Caco-2 (cell line): ENCODE measurements at regions of chr1 and their contacts with region 1.

Region 1: DNA sequence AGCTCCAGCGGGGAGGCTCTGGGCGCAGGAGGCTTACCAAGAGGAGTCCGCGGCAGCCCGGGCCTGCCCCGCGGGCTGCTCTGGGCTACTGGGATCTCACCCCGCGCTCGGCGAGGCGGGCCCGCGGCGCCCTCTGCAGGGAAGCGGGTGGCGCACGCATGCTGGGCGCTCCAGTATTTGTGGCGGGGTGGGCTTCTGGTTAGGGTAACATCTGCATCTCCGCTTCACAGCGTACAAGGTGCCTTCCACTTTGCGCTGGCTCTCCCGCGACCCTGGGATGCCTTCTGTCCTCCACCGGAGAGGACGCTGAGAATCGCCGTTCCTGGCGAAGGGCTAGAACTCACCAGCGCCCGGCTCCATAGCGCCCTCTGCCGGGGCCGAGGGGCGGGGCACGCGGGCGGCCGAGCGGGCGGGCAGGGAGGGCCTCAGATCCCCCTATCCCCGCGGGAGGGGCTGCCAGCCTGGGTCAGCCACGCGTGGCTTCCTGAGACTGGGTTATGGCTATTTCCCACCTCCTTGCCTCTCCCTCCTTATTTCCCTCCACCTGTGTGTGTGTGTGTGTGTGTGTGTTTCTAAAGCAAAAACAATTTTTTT is 46.6 kb upstream of the CTBS start:
- DNase-seq: peak; percentile 66 to 83
- H3K4me3 ChIP-seq: peak overlapping the region; percentile 47
- H3K4me3 Mint-ChIP-seq: peak overlapping the region; percentile 70
- H3K27ac Mint-ChIP-seq: peak overlapping the region; percentile 45
- H3K4me1 ChIP-seq: no peaks in the 10 kb centered on the region
- H3K4me1 Mint-ChIP-seq: no peaks in the 10 kb centered on the region
- H3K27me3 ChIP-seq: no peaks in the 10 kb centered on the region
- H3K27me3 Mint-ChIP-seq: no peaks in the 10 kb centered on the region
- CTCF ChIP-seq: peak; percentile 41 to 86

Region 2: DNA sequence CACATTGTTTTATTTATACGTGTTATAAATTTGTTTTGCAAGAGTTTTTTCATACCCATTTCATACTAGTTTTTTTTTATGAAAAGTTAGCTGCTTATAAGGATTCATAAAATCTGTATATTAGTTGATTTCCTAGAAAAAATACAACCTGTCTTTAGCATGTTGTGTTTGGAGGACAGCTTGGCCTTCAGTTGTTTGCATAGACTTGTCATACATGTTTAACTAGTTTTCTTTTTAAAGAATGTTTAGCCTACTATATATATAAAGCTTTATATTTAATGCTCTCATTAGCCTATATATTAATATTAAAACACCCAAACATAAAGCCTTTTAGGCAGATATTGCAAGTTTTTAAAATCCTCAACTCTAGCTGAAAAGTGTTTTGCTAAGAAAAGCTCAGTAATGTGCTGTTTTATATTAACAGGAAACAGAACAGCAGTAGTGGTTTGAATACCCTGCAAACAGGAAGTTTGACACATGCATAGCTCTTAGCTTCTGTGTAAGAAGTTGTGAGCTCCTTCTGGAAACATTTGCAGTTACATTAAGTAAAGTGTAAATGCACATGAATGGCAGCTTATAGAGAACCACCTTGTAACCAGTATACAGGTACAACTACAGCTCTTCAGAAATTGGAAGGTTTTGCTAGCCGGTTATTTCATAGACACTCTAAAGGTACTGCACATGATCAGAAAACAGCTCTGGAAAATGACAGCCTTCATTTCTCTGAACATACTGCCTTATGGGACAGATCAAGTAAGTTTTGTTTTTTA is 476.8 kb before region 1 on chr1 and contains the start of gene PRKACB:
- CTCF ChIA-PET with region 1: no interaction called
- POLR2A ChIA-PET with region 1: no interaction called
- intact Hi-C with region 1: loop called (anchors 1 kb)
- DNase-seq: no peak
- H3K4me3 ChIP-seq: no peak within 1 kb of the TSS
- H3K4me3 Mint-ChIP-seq: no peak within 1 kb of the TSS
- H3K27ac Mint-ChIP-seq: no peak within 1 kb of the TSS
- H3K4me1 ChIP-seq: no peaks in the 10 kb centered on the region
- H3K4me1 Mint-ChIP-seq: no peaks in the 10 kb centered on the region
- H3K27me3 ChIP-seq: no peaks in the 10 kb centered on the region
- H3K27me3 Mint-ChIP-seq: no peaks in the 10 kb centered on the region
- CTCF ChIP-seq: no peak
- total RNA-seq, gene PRKACB: 3.2 and 3.4 TPM in 2 replicates

Region 3: GRCh38 chr1:84298684-84299535 is 321.9 kb before region 1 on chr1:
- CTCF ChIA-PET with region 1: no interaction called
- POLR2A ChIA-PET with region 1: no interaction called
- intact Hi-C with region 1: no loop called
- DNase-seq: peak; percentile 29 to 48
- H3K4me3 ChIP-seq: peak overlapping the region; percentile 82
- H3K4me3 Mint-ChIP-seq: peak overlapping the region; percentile 87
- H3K27ac Mint-ChIP-seq: peak overlapping the region; percentile 87
- H3K4me1 ChIP-seq: no peaks in the 10 kb centered on the region
- H3K4me1 Mint-ChIP-seq: no peaks in the 10 kb centered on the region
- H3K27me3 ChIP-seq: no peaks in the 10 kb centered on the region
- H3K27me3 Mint-ChIP-seq: no peaks in the 10 kb centered on the region
- CTCF ChIP-seq: no peak

Region 4: GRCh38 chr1:84442256-84442655 is 178.6 kb before region 1 on chr1:
- CTCF ChIA-PET with region 1: interaction called, 3 read pairs
- POLR2A ChIA-PET with region 1: no interaction called
- intact Hi-C with region 1: loop called (anchors 1 kb)
- DNase-seq: peak in 1 of 2 experiments; percentile 1
- H3K4me3 ChIP-seq: no peak overlapping the region
- H3K4me3 Mint-ChIP-seq: no peak overlapping the region
- H3K27ac Mint-ChIP-seq: no peak overlapping the region
- H3K4me1 ChIP-seq: no peaks in the 10 kb centered on the region
- H3K4me1 Mint-ChIP-seq: no peaks in the 10 kb centered on the region
- H3K27me3 ChIP-seq: no peaks in the 10 kb centered on the region
- H3K27me3 Mint-ChIP-seq: peaks cover 5% of the 10 kb centered on the region
- CTCF ChIP-seq: peak in 1 of 2 experiments; percentile 13

Region 5: DNA sequence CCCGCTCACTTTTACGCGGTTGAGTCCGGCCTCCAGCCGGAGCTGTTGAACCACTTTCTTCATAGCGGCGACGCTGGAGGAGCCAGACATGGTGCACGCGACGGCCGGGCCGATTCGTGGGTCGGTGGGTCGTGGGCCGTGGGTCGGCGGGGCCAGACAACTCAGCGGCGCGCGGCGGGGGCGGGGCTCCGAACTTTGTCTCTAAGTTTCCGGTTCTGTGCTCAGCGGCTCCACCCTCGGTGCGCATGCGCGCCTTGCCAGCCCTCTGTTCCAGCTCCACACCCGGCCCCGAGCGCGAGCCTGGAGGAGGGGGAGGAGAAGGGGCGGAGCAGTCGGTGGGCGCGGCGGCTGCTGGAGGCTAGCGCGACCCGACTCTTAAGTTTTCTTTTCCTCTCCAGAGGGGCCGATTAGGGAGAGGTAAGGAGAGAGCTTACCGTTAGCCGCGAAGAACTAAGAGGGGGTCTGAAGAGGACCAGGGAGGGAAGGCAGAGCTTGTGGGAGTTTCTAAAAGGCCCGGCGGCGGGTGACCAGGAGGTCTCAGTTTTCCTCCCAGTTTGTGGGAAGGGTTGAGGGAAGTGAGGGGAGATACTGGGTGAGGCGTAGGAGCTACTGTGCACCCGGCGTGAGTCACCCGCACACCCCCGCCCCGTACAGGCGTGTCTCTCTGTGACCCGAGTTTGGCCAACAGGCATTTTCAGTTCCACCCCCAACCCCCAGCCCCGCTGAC is 114.7 kb before region 1 on chr1 and contains the starts of genes GNG5 and SPATA1:
- CTCF ChIA-PET with region 1: no interaction called
- POLR2A ChIA-PET with region 1: no interaction called
- intact Hi-C with region 1: loop called (anchors 10 kb)
- DNase-seq: peak; percentile 94 to 95
- H3K4me3 ChIP-seq: peak within 1 kb of the TSS; percentile 81
- H3K4me3 Mint-ChIP-seq: peak within 1 kb of the TSS; percentile 88
- H3K27ac Mint-ChIP-seq: peak within 1 kb of the TSS; percentile 95
- H3K4me1 ChIP-seq: peaks cover 7% of the 10 kb centered on the region; the same call in 1 of the 2 replicates
- H3K4me1 Mint-ChIP-seq: no peaks in the 10 kb centered on the region
- H3K27me3 ChIP-seq: no peaks in the 10 kb centered on the region
- H3K27me3 Mint-ChIP-seq: no peaks in the 10 kb centered on the region
- CTCF ChIP-seq: no peak
- total RNA-seq, gene GNG5: 83.1 and 93.2 TPM in 2 replicates
- total RNA-seq, gene SPATA1: 0.57 TPM in 1 of 2 replicates, not detected in the other

Region 6: DNA sequence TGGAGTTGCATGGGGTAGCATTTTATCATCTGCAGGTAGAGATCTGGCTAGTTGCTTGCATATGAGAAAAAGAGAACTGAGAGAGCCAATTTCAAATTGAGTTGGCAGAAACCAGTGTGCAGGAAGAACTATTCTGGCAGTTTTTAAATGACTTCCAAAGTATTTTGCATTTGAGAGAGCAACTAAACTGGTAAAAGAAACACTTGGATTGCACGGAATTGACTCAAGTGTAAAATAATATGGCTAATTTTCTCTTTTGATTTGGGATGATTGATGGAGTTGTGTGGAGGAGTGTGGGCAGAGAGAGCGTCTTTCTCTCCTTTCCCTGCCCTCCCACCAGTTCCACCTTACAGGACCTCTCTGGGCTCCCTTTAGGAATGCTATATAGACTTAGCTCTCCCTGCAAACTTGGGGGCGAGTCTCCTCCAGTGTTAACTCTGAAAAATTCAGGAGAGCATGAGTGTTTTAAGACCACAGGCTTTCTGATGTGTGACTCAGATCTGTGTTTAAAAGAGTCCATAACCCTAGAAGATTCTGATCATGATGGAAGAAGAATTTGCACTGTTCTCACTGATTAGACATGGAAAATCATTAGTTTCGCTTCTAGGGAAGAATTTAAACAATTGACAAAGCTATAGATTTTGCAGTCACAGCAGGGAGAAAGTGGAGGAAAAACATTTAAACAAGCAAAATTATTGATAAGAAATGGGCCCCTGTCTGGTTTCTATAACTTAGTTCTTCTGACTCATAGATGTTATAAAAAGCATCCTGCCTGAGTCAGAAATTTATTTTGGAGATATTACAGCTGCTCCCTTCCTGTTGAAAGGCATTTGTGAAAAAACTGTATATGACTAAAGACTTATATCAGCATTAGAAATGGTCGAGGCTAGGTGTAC is 21.7 kb before region 1 on chr1:
- CTCF ChIA-PET with region 1: no interaction called
- POLR2A ChIA-PET with region 1: no interaction called
- intact Hi-C with region 1: no loop called
- DNase-seq: no peak
- H3K4me3 ChIP-seq: no peak overlapping the region
- H3K4me3 Mint-ChIP-seq: no peak overlapping the region
- H3K27ac Mint-ChIP-seq: no peak overlapping the region
- H3K4me1 ChIP-seq: no peaks in the 10 kb centered on the region
- H3K4me1 Mint-ChIP-seq: no peaks in the 10 kb centered on the region
- H3K27me3 ChIP-seq: no peaks in the 10 kb centered on the region
- H3K27me3 Mint-ChIP-seq: no peaks in the 10 kb centered on the region
- CTCF ChIP-seq: no peak

Region 7: GRCh38 chr1:84753516-84754385 is 132.9 kb after region 1 on chr1:
- CTCF ChIA-PET with region 1: no interaction called
- POLR2A ChIA-PET with region 1: no interaction called
- intact Hi-C with region 1: loop called (anchors 1 kb)
- DNase-seq: peak; percentile 57 to 64
- H3K4me3 ChIP-seq: no peak overlapping the region
- H3K4me3 Mint-ChIP-seq: no peak overlapping the region
- H3K27ac Mint-ChIP-seq: no peak overlapping the region
- H3K4me1 ChIP-seq: no peaks in the 10 kb centered on the region
- H3K4me1 Mint-ChIP-seq: no peaks in the 10 kb centered on the region
- H3K27me3 ChIP-seq: no peaks in the 10 kb centered on the region
- H3K27me3 Mint-ChIP-seq: no peaks in the 10 kb centered on the region
- CTCF ChIP-seq: peak; percentile 78 to 87

Region 8: GRCh38 chr1:84892705-84893618 is 272.1 kb after region 1 on chr1 and contains the start of gene LPAR3:
- CTCF ChIA-PET with region 1: no interaction called
- POLR2A ChIA-PET with region 1: no interaction called
- intact Hi-C with region 1: no loop called
- DNase-seq: peak in 1 of 2 experiments; percentile 17
- H3K4me3 ChIP-seq: peak within 1 kb of the TSS; percentile 19
- H3K4me3 Mint-ChIP-seq: peak within 1 kb of the TSS; percentile 60
- H3K27ac Mint-ChIP-seq: no peak within 1 kb of the TSS
- H3K4me1 ChIP-seq: no peaks in the 10 kb centered on the region
- H3K4me1 Mint-ChIP-seq: no peaks in the 10 kb centered on the region
- H3K27me3 ChIP-seq: no peaks in the 10 kb centered on the region; the same call in none of the 2 replicates
- H3K27me3 Mint-ChIP-seq: peaks cover 26% of the 10 kb centered on the region
- CTCF ChIP-seq: no peak
- total RNA-seq, gene LPAR3: not detected in 2 replicates